ENCODE measurements at regions of chrX and their contacts with region 1.

Region 1: DNA sequence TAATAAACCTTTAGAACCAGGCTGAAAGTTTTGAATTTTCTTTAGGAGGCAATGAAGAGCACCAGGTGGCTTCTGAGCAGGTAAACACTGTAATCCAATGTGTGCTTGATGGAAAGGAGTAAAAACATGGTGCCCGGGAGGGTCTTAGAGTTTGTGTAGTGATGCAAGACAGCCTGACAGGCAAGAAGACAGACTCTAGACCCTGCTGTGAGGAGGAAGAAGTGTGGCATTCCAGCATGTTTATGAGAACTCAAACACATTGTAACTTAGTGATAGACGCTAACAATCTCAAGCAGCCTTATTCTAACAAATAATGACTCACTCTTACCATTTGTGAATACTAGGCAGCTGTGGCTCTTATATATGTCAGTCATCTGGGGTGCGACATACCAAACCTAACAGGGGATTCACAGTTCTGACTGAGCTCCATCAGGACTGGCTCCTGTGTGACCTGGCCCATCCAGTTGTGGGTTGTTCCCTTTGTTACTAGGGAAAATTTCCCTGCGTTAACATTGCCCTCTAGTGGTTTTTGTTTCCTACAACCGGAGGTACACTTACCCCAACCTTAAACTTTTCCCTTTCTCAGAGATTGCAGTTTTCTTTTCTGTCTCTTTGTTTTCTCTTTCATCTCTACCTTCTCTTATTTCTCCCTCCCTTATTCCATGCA is 53.8 kb downstream of the VSIG4 start:
- H3K4me3 Mint-ChIP-seq: no peak overlapping the region
- H3K27ac Mint-ChIP-seq: peak overlapping the region; percentile 41
- H3K4me1 Mint-ChIP-seq: peaks cover 34% of the 10 kb centered on the region
- H3K27me3 Mint-ChIP-seq: peaks cover 1% of the 10 kb centered on the region

Region 2: GRCh38 chrX:65581661-65582339 is 404.3 kb before region 1 on chrX:
- intact Hi-C with region 1: loop called (anchors 5 kb)
- H3K4me3 Mint-ChIP-seq: no peak overlapping the region
- H3K27ac Mint-ChIP-seq: no peak overlapping the region
- H3K4me1 Mint-ChIP-seq: peaks cover 15% of the 10 kb centered on the region
- H3K27me3 Mint-ChIP-seq: peaks cover 8% of the 10 kb centered on the region

Region 3: DNA sequence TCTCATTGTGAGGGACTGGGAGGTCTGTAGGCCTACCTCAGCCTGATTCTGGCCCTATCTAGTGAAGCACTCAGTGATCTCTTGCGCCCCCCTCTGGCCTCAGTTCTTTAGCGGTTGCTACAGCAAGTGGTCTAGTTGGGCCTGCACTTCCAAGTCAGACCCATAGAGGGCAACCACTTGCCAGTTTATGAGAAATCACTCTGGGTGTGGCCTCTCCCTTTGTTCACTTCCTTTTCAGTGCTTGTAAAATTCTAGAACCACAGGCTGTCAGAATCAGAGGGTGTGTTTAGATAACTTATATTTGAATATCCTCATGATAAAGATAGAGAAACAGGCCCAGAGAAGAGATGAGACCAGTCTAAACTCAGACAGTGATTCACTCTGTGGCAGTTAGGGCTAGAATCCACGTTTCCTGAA is 390.6 kb before region 1 on chrX:
- intact Hi-C with region 1: loop called (anchors 5 kb)
- H3K4me3 Mint-ChIP-seq: no peak overlapping the region
- H3K27ac Mint-ChIP-seq: no peak overlapping the region
- H3K4me1 Mint-ChIP-seq: peaks cover 28% of the 10 kb centered on the region
- H3K27me3 Mint-ChIP-seq: no peaks in the 10 kb centered on the region

Region 4: GRCh38 chrX:65745992-65746391 is 240.1 kb before region 1 on chrX:
- intact Hi-C with region 1: loop called (anchors 5 kb)
- H3K4me3 Mint-ChIP-seq: no peak overlapping the region
- H3K27ac Mint-ChIP-seq: no peak overlapping the region
- H3K4me1 Mint-ChIP-seq: peaks cover 22% of the 10 kb centered on the region
- H3K27me3 Mint-ChIP-seq: peaks cover under 1% of the 10 kb centered on the region

Region 5: GRCh38 chrX:65837875-65838549 is 148.0 kb before region 1 on chrX:
- intact Hi-C with region 1: no loop called
- H3K4me3 Mint-ChIP-seq: no peak overlapping the region
- H3K27ac Mint-ChIP-seq: no peak overlapping the region
- H3K4me1 Mint-ChIP-seq: peaks cover 29% of the 10 kb centered on the region
- H3K27me3 Mint-ChIP-seq: no peaks in the 10 kb centered on the region

Region 6: DNA sequence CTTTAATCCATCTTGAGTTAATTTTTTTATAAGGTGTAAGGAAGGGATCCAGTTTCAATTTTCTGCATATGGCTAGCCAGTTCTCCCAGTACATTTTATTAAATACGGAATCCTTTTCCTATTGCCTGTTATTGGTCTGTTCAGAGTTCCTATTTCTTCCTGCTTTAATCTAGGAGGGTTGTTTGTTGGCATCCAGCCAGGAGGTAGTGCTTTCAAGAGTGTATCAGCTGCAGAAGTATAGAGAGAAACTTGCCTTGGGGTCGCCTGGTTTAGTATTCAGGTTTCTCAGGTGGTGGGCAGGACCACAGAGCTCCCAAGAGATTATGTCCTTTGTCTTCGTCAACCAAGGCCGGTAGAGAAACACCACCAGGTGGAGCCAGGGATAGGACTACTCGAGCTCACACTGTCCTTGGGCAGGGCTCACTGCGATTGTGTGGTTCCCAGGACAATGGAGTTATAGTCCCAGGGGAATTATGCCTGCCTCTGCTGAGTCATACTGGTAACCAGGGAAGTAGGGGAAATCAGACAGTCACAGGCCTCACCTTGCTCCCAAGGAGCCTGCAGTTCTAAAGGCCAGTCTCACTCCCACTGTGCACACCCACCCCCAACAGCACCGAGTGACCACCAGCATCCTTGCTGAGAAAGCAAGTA is 114.3 kb before region 1 on chrX:
- intact Hi-C with region 1: loop called (anchors 5 kb)
- H3K4me3 Mint-ChIP-seq: no peak overlapping the region
- H3K27ac Mint-ChIP-seq: peak overlapping the region; percentile 47
- H3K4me1 Mint-ChIP-seq: peaks cover 5% of the 10 kb centered on the region
- H3K27me3 Mint-ChIP-seq: peaks cover 1% of the 10 kb centered on the region

Region 7: GRCh38 chrX:66012094-66012534 is 26.1 kb after region 1 on chrX:
- intact Hi-C with region 1: no loop called
- H3K4me3 Mint-ChIP-seq: no peak overlapping the region
- H3K27ac Mint-ChIP-seq: peak overlapping the region; percentile 87
- H3K4me1 Mint-ChIP-seq: peaks cover 49% of the 10 kb centered on the region
- H3K27me3 Mint-ChIP-seq: peaks cover 6% of the 10 kb centered on the region

Region 8: DNA sequence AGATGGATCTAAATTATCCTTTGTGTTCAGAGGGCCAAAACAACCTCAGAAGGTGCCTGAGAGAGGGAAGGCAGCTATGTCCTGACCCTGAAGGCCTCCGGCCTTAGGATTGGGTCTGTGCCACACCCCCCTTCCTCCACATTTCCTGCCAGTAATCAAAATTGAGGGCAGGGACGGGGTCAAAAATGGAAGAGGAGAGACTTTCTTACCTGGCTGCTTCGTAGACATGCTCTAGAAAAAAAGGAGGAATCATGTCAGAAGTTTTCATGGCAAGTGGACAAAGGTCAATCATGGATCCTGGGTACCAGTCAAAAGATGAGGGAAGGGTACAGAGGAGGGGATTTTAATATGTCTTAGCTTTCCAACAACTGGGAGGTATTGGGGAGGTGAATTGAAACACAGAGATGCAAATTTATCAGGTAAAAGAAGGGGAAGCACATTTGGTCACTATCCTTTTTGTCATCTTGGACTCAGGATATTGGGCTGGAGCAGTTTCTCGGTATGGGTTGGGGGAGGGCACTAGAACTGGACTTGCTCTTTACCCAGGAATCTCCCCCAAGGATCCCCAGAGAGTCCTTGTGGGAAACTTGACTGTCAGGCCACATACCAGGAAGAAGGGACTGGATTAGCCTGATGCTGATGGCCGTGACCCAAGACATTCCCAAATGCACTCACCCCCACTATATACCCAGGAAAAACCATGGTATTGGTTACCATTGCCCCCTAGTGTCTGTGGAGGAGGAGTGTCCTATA is 36.8 kb after region 1 on chrX:
- intact Hi-C with region 1: loop called (anchors 5 kb)
- H3K4me3 Mint-ChIP-seq: no peak overlapping the region
- H3K27ac Mint-ChIP-seq: no peak overlapping the region
- H3K4me1 Mint-ChIP-seq: peaks cover 60% of the 10 kb centered on the region
- H3K27me3 Mint-ChIP-seq: peaks cover 7% of the 10 kb centered on the region